ENCODE measurements at regions of chr1 and their contacts with region 1.

Region 1: GRCh38 chr1:53765657-53766056 is 26.7 kb upstream of the GLIS1 start:
- DNase-seq: no peak
- CTCF ChIP-seq: no peak

Region 2: GRCh38 chr1:53754484-53755312 is 11.0 kb before region 1 on chr1:
- CTCF ChIA-PET with region 1: interaction called, 38 read pairs
- POLR2A ChIA-PET with region 1: no interaction called
- DNase-seq: peak; percentile 58
- CTCF ChIP-seq: peak; percentile 70

Measured in GM10248 (cell line).